ENCODE measurements at regions of chr3 and their contacts with region 1.

Region 1: GRCh38 chr3:48039487-48040190 is 23.4 kb upstream of the MAP4 start:
- DNase-seq: no peak
- H3K4me3 ChIP-seq: no peak overlapping the region
- H3K27ac ChIP-seq: peak overlapping the region; percentile 59 to 69
- H3K4me1 ChIP-seq: peaks cover 0 to 66% (median 36%) of the 10 kb centered on the region in 4 donors
- H3K27me3 ChIP-seq: no peaks in the 10 kb centered on the region
- CTCF ChIP-seq: no peak

Region 2: GRCh38 chr3:48088749-48089466 is 49.3 kb after region 1 on chr3:
- intact Hi-C with region 1: loop called (anchors 10 kb)
- DNase-seq: peak; percentile 97 to 98
- H3K4me3 ChIP-seq: peak overlapping the region; percentile 94 to 99
- H3K27ac ChIP-seq: peak overlapping the region; percentile 98 to 99
- H3K4me1 ChIP-seq: peaks cover 0 to 44% (median 33%) of the 10 kb centered on the region in 4 donors
- H3K27me3 ChIP-seq: no peaks in the 10 kb centered on the region
- CTCF ChIP-seq: peak in 1 of 2 experiments; percentile 6

Region 3: GRCh38 chr3:48157950-48158376 is 118.3 kb after region 1 on chr3:
- intact Hi-C with region 1: no loop called
- DNase-seq: peak; percentile 45 to 72
- H3K4me3 ChIP-seq: no peak overlapping the region
- H3K27ac ChIP-seq: no peak overlapping the region
- H3K4me1 ChIP-seq: no peaks in the 10 kb centered on the region
- H3K27me3 ChIP-seq: no peaks in the 10 kb centered on the region
- CTCF ChIP-seq: peak; percentile 56 to 62